Psoas muscle (tissue), 8 donors: ENCODE measurements at regions of chr20 and their contacts with region 1.

Region 1: GRCh38 chr20:17646670-17647371 is 35.2 kb downstream of the RRBP1 start:
- DNase-seq: peak in 1 of 2 donors; percentile 51
- ATAC-seq: peak in 3 of 4 donors; percentile 23 to 49 (median 44)
- H3K4me3 ChIP-seq: no peak overlapping the region
- H3K27ac ChIP-seq: peak overlapping the region; percentile 6
- H3K4me1 ChIP-seq: peaks cover 81% of the 10 kb centered on the region
- H3K27me3 ChIP-seq: no peaks in the 10 kb centered on the region
- CTCF ChIP-seq: no peak

Region 2: DNA sequence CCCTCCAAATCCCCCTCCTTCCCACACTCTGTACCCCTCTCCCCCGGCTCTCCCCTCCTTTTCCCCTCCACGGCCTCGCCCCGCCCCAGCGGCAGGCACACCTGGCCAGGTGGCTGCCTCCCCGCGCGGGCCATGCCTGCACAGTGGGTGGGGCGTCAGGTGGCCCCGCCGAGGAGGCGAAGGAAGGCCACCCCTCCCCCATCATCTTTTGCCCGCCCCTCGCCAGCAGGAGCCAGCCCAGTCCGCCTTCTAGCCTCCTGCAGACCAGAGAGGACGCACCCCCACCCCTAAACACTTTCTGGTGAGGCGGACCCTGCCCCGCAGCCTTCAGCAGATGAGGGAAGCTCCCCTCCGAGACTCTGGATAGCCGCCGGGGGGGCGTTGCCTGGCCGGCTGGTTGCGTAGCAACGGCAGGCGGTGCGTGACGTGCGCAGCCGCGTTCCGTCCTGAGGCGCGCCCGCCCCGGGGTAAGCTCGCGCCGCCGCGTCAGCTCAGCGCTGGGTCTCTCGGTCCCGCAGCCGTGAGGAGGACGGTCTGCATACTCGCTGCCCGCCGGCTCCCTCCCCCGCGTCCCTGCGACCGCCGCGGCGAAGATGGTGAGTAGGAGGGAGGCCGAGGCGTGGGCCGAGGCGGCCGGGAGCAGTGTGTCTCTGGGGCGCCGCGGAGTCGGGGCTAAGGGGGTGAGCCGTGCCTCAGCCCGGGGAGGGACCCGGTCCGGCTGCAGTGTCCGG is 77.0 kb before region 1 on chr20 and contains the start of gene DSTN:
- intact Hi-C with region 1: loop called in 1 of 2 experiments (anchors 2 kb)
- DNase-seq: peak; percentile 92 to 96
- ATAC-seq: peak; percentile 95 to 97 (median 96)
- H3K4me3 ChIP-seq: peak within 1 kb of the TSS; percentile 84
- H3K27ac ChIP-seq: peak within 1 kb of the TSS; percentile 97
- H3K4me1 ChIP-seq: peaks cover 14% of the 10 kb centered on the region
- H3K27me3 ChIP-seq: no peaks in the 10 kb centered on the region
- CTCF ChIP-seq: no peak
- total RNA-seq, gene DSTN: 45.6 to 82.3 (median 66.2) TPM

Region 3: GRCh38 chr20:17985388-17986018 is 338.7 kb after region 1 on chr20:
- intact Hi-C with region 1: no loop called
- DNase-seq: no peak
- ATAC-seq: peak; percentile 70 to 91 (median 80)
- H3K4me3 ChIP-seq: no peak overlapping the region
- H3K27ac ChIP-seq: no peak overlapping the region
- H3K4me1 ChIP-seq: no peaks in the 10 kb centered on the region
- H3K27me3 ChIP-seq: no peaks in the 10 kb centered on the region
- CTCF ChIP-seq: no peak